ENCODE measurements at regions of chr4 and their contacts with region 1.

Region 1: DNA sequence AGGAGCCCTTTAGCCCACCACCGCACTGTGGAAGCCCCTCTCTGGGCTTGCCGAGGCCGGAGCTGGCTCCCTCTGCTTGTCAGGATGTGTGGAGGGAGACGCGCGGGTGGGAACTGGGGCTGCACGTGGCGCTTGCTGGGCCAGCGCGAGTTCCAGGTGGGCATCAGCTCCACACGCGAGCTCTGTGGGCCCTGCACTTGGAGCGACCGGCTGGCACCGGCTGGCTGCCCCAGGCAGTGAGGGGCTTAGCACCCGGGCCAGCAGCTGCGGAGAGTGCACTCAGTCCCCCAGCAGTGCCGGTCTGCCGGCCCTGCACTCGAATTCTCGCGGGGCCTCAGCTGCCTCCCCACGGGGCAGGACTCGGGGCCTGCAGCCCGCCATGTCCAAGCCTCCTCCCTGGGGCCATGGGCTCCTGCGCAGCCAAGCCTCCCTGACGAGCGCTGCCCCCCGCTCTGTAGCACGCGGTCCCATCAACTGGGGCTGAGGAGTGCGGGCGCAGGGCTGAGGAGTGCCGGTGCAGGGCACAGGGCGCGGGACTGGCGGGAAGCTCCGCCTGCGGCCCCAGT is 93.5 kb downstream of the DTHD1 start:
- DNase-seq: no peak
- H3K4me3 Mint-ChIP-seq: no peak overlapping the region
- H3K27ac Mint-ChIP-seq: no peak overlapping the region
- H3K4me1 Mint-ChIP-seq: no peaks in the 10 kb centered on the region
- H3K27me3 Mint-ChIP-seq: peaks cover 12% of the 10 kb centered on the region

Region 2: GRCh38 chr4:36218121-36218520 is 156.8 kb before region 1 on chr4:
- intact Hi-C with region 1: no loop called
- DNase-seq: no peak
- H3K4me3 Mint-ChIP-seq: no peak overlapping the region
- H3K27ac Mint-ChIP-seq: no peak overlapping the region
- H3K4me1 Mint-ChIP-seq: peaks cover 27% of the 10 kb centered on the region
- H3K27me3 Mint-ChIP-seq: no peaks in the 10 kb centered on the region

Region 3: DNA sequence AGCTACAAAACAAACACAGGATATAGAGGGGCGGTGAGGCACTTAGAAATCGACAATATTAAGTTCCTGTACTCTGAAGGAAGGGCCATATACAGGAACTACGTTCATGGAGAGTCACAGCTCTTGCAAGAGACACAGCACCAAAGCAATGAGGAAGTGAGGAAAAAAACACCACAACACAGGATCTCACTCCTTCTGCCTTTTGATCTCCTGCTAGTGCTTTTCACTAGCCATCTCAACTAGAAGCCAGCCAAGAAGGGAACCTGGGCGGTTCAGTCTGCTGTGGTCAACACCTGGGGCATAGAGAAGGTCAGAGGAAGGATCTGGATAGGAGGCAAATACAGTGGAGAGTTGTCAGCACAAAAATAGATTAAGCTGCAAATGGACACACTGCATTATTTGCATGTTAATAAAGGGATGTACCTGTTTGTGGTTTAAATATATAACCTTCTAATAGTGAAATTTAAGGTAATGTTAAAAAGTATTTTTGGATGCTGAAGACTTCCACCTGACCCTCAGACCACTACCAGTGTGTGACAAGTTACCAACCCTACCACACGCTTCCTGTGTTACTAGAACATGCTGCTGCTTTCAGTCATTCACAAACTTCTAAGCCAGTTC is 11.1 kb after region 1 on chr4:
- intact Hi-C with region 1: loop called (anchors 2 kb)
- DNase-seq: peak; percentile 86
- H3K4me3 Mint-ChIP-seq: peak overlapping the region; percentile 47
- H3K27ac Mint-ChIP-seq: peak overlapping the region; percentile 83
- H3K4me1 Mint-ChIP-seq: peaks cover 20% of the 10 kb centered on the region
- H3K27me3 Mint-ChIP-seq: no peaks in the 10 kb centered on the region

Region 4: DNA sequence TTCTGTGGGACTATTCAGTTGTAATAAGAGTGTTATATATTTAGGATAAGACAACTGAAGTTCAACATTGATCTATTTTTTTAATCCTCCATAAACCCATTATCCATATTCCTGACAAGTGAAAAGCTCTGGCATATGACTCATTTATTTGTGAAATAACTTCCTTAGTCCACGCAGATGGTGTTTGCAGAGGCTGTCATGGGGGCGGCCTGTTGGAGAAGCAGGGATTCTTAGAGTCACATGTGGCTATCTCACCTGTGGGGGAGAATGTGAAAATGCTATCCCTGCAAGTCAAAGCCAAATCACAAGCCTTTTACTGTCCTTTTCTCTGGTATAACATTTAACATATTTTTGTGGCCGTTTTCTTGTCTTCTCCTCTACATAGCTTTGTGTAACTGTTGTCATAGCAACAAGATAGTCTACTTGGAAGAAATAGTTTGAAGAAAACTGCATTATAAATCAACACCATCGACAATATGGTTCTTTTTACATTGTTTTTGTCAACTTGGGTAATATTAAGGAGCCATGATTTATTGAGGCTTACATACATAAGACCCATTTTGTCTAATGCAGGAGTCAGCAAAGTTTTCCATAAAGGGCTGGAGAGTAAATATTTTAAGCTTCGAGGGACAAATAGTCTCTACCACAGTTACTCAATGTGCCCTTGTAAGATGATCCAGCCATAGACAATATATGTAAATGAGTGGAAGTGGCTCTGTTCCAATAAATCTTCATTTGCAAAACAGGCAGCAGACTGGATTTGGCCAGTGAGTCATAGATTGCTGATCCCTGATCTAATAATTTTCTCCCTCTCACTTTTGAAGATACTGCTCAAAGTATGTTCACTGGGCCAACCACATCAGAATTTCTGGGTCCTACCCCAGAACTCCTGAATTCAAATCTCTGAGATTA is 301.5 kb after region 1 on chr4:
- intact Hi-C with region 1: no loop called
- DNase-seq: no peak
- H3K4me3 Mint-ChIP-seq: no peak overlapping the region
- H3K27ac Mint-ChIP-seq: no peak overlapping the region
- H3K4me1 Mint-ChIP-seq: no peaks in the 10 kb centered on the region
- H3K27me3 Mint-ChIP-seq: no peaks in the 10 kb centered on the region

Measured in activated CD4-positive, alpha-beta T cell treated with anti-CD3 and anti-CD28 coated beads, Interleukin-2, amount 10 ng/mL, durations not matched to agents 24 days and 14 days (primary cell).